Endothelial cell of umbilical vein (primary cell): ENCODE measurements at regions of chr12 and their contacts with region 1.

Region 1: DNA sequence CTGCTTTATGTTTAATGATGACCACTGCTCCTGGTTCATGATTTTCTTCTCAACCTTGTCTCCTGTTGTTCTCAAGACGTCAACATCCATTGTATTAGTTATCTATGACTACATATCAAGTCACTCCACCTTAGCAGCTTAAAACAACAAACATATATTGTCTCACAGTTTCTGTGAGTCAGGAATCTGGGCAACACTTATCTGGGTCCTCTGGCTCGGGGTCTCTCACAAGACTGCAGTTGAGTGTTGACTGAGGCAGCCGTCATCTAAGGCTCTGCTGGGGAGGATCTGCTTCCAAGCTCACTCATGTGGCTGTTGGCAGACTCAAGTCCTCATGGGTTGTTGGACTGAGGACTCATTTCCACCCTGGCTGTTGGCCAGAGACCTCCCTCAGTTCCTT is 27.3 kb upstream of the FRS2 start:
- DNase-seq: peak; percentile 81
- H3K4me3 ChIP-seq: no peak overlapping the region
- H3K27ac ChIP-seq: peak overlapping the region; percentile 55
- H3K4me1 ChIP-seq: peaks cover 6% of the 10 kb centered on the region
- H3K27me3 ChIP-seq: no peaks in the 10 kb centered on the region
- CTCF ChIP-seq: no peak
- POLR2A ChIP-seq: no peak

Region 2: GRCh38 chr12:69405466-69405865 is 37.4 kb before region 1 on chr12:
- CTCF ChIA-PET with region 1: no interaction called
- POLR2A ChIA-PET with region 1: interaction called, 3 read pairs
- dilution Hi-C with region 1: no loop called
- intact Hi-C with region 1: loop called (anchors 2 kb)
- DNase-seq: peak; percentile 92
- H3K4me3 ChIP-seq: no peak overlapping the region
- H3K27ac ChIP-seq: peak overlapping the region; percentile 97
- H3K4me1 ChIP-seq: peaks cover 19% of the 10 kb centered on the region
- H3K27me3 ChIP-seq: no peaks in the 10 kb centered on the region
- CTCF ChIP-seq: no peak
- POLR2A ChIP-seq: no peak

Region 3: GRCh38 chr12:69885658-69886057 is 442.8 kb after region 1 on chr12:
- CTCF ChIA-PET with region 1: no interaction called
- POLR2A ChIA-PET with region 1: no interaction called
- dilution Hi-C with region 1: no loop called
- intact Hi-C with region 1: no loop called
- DNase-seq: no peak
- H3K4me3 ChIP-seq: no peak overlapping the region
- H3K27ac ChIP-seq: no peak overlapping the region
- H3K4me1 ChIP-seq: no peaks in the 10 kb centered on the region
- H3K27me3 ChIP-seq: peaks cover 0 to 6% of the 10 kb centered on the region in 2 experiments
- CTCF ChIP-seq: no peak
- POLR2A ChIP-seq: no peak